A673 (cell line): ENCODE measurements at regions of chr13 and their contacts with region 1.

Region 1: GRCh38 chr13:39051157-39051556 is 12.9 kb downstream of the NHLRC3 start:
- DNase-seq: peak; percentile 80
- H3K4me3 ChIP-seq: no peak overlapping the region
- H3K27ac ChIP-seq: no peak overlapping the region
- H3K4me1 ChIP-seq: peaks cover 33% of the 10 kb centered on the region
- H3K27me3 ChIP-seq: no peaks in the 10 kb centered on the region
- CTCF ChIP-seq: peak; percentile 66

Region 2: GRCh38 chr13:39159393-39159792 is 108.2 kb after region 1 on chr13:
- CTCF ChIA-PET with region 1: no interaction called
- POLR2A ChIA-PET with region 1: no interaction called
- intact Hi-C with region 1: no loop called
- DNase-seq: peak; percentile 71
- H3K4me3 ChIP-seq: no peak overlapping the region
- H3K27ac ChIP-seq: no peak overlapping the region
- H3K4me1 ChIP-seq: peaks cover 15% of the 10 kb centered on the region
- H3K27me3 ChIP-seq: no peaks in the 10 kb centered on the region
- CTCF ChIP-seq: no peak

Region 3: DNA sequence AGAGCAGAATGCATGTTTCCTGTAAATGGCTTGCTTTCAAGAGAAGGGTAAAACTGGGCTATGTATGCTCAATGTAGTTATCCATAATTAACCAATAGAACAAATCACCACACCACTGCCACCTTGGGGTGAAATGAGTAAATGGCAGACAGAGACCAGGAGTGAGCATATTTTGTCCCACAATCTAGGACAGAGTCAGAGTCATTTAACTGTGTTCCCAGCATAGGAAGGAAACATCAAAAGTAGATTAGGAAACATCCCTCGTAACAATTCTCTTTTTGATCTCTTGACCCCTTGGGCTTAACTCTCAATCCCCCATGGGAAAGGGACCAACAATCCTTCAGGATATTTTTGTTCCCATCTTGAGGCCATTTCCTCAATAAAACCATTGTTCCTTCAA is 211.9 kb after region 1 on chr13:
- CTCF ChIA-PET with region 1: interaction called, 5 read pairs
- POLR2A ChIA-PET with region 1: no interaction called
- intact Hi-C with region 1: loop called (anchors 5 kb)
- DNase-seq: peak; percentile 78
- H3K4me3 ChIP-seq: no peak overlapping the region
- H3K27ac ChIP-seq: no peak overlapping the region
- H3K4me1 ChIP-seq: peaks cover 21% of the 10 kb centered on the region
- H3K27me3 ChIP-seq: no peaks in the 10 kb centered on the region
- CTCF ChIP-seq: peak; percentile 84

Region 4: DNA sequence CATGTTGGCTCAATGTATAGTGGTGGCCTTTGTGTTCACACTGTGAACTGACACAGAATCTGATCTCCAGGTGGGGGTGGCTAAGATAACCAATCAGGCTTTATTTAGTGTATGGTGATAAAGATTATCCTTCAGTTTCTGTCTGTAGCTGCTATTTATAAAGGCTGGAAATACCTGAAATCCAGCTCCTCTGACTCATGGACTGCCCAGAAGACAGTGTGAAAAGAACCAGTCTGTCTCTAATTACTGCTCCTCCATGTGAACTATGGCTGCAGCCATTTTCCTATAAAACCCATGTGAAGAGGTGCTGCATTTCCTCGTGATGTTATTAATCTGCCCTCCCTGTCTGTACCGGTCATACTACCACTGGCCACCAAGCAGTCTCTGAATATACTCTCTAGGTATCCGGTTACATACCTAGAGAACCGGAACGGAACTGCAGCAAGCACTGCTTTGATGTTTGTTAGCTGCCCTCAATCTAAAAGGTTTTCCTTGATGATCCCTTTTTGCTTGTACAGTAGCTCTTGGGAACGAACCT is 313.9 kb after region 1 on chr13:
- CTCF ChIA-PET with region 1: no interaction called
- POLR2A ChIA-PET with region 1: no interaction called
- intact Hi-C with region 1: loop called (anchors 5 kb)
- DNase-seq: no peak
- H3K4me3 ChIP-seq: no peak overlapping the region
- H3K27ac ChIP-seq: peak overlapping the region; percentile 92
- H3K4me1 ChIP-seq: peaks cover 72% of the 10 kb centered on the region
- H3K27me3 ChIP-seq: no peaks in the 10 kb centered on the region
- CTCF ChIP-seq: no peak

Region 5: GRCh38 chr13:39415008-39415802 is 364.0 kb after region 1 on chr13:
- CTCF ChIA-PET with region 1: no interaction called
- POLR2A ChIA-PET with region 1: interaction called, 13 read pairs
- intact Hi-C with region 1: no loop called
- DNase-seq: peak; percentile 83
- H3K4me3 ChIP-seq: no peak overlapping the region
- H3K27ac ChIP-seq: peak overlapping the region; percentile 56
- H3K4me1 ChIP-seq: peaks cover 99% of the 10 kb centered on the region
- H3K27me3 ChIP-seq: no peaks in the 10 kb centered on the region
- CTCF ChIP-seq: peak; percentile 82

Region 6: DNA sequence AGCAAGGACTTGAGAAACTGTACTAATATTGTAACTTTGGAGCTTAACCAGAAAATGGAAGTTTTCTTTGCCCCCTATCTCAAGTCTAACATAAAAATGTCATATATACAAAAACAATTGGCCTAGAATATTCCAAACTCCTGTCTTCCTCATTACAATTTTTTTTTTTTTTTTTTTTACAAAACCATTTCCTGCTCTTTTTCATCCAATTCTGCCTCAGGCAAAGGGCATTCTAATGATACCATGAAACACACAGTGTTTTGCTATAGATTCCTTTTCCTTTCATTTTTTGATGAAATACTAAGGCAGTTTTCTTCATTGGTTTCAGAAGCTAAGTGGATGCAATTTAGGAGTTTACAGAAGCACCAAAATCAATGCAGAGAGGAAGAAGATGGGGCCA is 432.2 kb after region 1 on chr13:
- CTCF ChIA-PET with region 1: no interaction called
- POLR2A ChIA-PET with region 1: no interaction called
- intact Hi-C with region 1: no loop called
- DNase-seq: peak; percentile 43
- H3K4me3 ChIP-seq: no peak overlapping the region
- H3K27ac ChIP-seq: peak overlapping the region; percentile 48
- H3K4me1 ChIP-seq: peaks cover 50% of the 10 kb centered on the region
- H3K27me3 ChIP-seq: no peaks in the 10 kb centered on the region
- CTCF ChIP-seq: no peak

Region 7: GRCh38 chr13:39616087-39616694 is 565.0 kb after region 1 on chr13:
- CTCF ChIA-PET with region 1: interaction called, 26 read pairs
- POLR2A ChIA-PET with region 1: interaction called, 4 read pairs
- intact Hi-C with region 1: loop called (anchors 2 kb)
- DNase-seq: peak; percentile 89
- H3K4me3 ChIP-seq: no peak overlapping the region
- H3K27ac ChIP-seq: no peak overlapping the region
- H3K4me1 ChIP-seq: peaks cover 31% of the 10 kb centered on the region
- H3K27me3 ChIP-seq: no peaks in the 10 kb centered on the region
- CTCF ChIP-seq: peak; percentile 91

Region 8: DNA sequence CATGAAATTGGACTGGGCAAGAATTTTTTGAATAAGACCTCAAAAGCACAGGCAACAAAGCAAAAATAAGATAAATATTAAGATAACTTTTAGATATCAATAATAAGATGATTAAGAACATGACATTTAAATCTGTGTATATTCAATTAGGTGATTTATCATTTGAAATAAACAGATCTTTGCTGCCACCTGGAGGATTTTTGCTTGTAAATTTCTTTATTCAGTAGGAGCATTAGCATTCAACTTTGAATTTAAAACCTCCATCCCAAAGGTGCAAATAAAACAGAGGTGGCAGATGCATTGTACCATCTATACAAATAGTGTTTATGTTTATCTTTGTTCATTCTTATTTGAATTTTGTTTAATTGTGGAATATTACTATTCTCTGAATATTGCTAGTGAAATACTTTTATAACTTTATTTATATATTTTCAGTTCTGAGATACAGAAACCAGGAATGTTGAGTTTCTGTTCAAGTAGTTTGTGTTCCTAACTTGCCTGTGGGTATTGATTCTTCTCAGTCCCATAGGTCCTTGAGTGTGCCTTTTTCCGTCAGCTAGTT is 625.2 kb after region 1 on chr13:
- CTCF ChIA-PET with region 1: interaction called, 4 read pairs
- POLR2A ChIA-PET with region 1: no interaction called
- intact Hi-C with region 1: loop called (anchors 1 kb)
- DNase-seq: peak; percentile 84
- H3K4me3 ChIP-seq: no peak overlapping the region
- H3K27ac ChIP-seq: no peak overlapping the region
- H3K4me1 ChIP-seq: peaks cover 12% of the 10 kb centered on the region
- H3K27me3 ChIP-seq: no peaks in the 10 kb centered on the region
- CTCF ChIP-seq: peak; percentile 66

Region 9: GRCh38 chr13:39765801-39766463 is 714.8 kb after region 1 on chr13:
- CTCF ChIA-PET with region 1: no interaction called
- POLR2A ChIA-PET with region 1: no interaction called
- intact Hi-C with region 1: loop called (anchors 10 kb)
- DNase-seq: peak; percentile 80
- H3K4me3 ChIP-seq: no peak overlapping the region
- H3K27ac ChIP-seq: no peak overlapping the region
- H3K4me1 ChIP-seq: peaks cover 33% of the 10 kb centered on the region
- H3K27me3 ChIP-seq: no peaks in the 10 kb centered on the region
- CTCF ChIP-seq: peak; percentile 73